ENCODE measurements at regions of chr11 and their contacts with region 1.

Region 1: DNA sequence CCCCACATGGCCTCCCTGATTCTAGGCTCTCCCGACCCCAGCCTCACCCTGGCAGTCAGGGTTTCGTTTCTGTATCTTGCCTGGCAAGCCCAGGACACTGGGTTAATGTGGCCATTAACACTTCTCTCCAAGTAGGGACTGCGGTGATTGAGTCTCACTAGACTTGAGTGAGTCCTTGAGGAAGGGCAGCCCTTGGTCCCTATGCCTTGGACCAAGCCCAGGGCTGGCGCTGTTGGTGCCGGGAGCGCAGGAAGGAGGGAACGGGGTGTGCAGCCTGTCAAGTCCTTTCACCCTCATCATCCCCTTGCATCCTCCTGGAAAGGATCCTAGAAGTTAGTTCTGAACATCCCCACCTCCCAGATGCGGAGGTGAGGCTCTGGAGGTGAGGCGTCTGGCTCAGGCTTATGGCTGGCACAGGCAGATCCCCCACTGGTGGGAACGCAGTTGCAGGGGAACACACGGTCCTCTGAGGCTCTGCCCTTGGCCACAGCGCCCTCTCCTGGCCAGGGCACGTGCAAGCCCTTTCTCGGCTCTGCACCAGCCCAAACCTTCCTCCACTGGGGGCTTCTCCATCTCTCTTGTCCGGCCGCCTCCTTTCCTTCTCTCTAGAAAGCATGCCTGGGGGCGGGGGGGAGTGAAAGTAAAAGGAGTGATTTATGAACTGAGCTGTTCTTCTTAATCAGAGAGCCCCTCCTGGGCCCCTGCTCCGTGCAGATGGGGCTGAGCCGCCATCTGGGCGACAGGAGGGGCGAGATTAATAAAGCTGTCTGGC is 56.7 kb downstream of the TP53I11 start:
- DNase-seq: no peak
- H3K4me3 ChIP-seq: no peak overlapping the region
- H3K27me3 ChIP-seq: peaks cover 10% of the 10 kb centered on the region; the same call in 1 of the 2 replicates
- CTCF ChIP-seq: peak; percentile 96

Region 2: GRCh38 chr11:44726283-44727113 is 167.5 kb before region 1 on chr11 and contains the start of gene TSPAN18:
- CTCF ChIA-PET with region 1: interaction called, 70 read pairs
- POLR2A ChIA-PET with region 1: no interaction called
- DNase-seq: no peak
- H3K4me3 ChIP-seq: peak within 1 kb of the TSS; percentile 35
- H3K27me3 ChIP-seq: peaks cover 26% of the 10 kb centered on the region
- CTCF ChIP-seq: no peak
- polyA plus RNA-seq, gene TSPAN18: 0.20 and 0.55 TPM in 2 replicates

Region 3: GRCh38 chr11:44731685-44732430 is 162.2 kb before region 1 on chr11:
- CTCF ChIA-PET with region 1: interaction called, 70 read pairs
- POLR2A ChIA-PET with region 1: no interaction called
- DNase-seq: no peak
- H3K4me3 ChIP-seq: no peak overlapping the region
- H3K27me3 ChIP-seq: peaks cover 22% of the 10 kb centered on the region
- CTCF ChIP-seq: no peak

Region 4: DNA sequence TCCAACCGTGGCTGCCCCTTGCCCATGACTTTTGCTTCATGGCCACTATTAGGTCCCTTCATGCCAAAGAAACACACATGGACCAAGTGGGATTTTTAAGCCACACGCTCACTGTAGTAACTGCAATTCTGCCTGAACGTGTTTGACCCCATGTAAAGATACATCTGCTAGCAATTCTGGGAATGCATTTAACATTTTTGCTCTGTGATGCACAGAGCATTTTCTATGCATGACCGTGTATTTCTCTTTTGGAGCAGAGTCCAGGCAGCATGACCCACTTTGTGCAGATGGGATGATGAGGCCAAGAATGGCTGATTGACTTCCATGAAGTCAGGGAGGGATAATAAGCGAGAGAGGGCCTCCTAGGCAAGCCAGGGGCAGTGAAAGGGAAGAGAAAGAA is 51.8 kb before region 1 on chr11:
- CTCF ChIA-PET with region 1: no interaction called
- POLR2A ChIA-PET with region 1: no interaction called
- DNase-seq: peak; percentile 91
- H3K4me3 ChIP-seq: no peak overlapping the region
- H3K27me3 ChIP-seq: no peaks in the 10 kb centered on the region; the same call in 1 of the 2 replicates
- CTCF ChIP-seq: no peak

Measured in BJ (cell line).